ENCODE measurements at regions of chr1 and their contacts with region 1.

Region 1: GRCh38 chr1:31715087-31715872 is 11.5 kb upstream of the COL16A1 start:
- DNase-seq: peak; percentile 95
- ATAC-seq: peak; percentile 95

Region 2: GRCh38 chr1:31789259-31790065 is 74.2 kb after region 1 on chr1:
- intact Hi-C with region 1: loop called in 1 of 2 experiments (anchors 10 kb)
- DNase-seq: peak; percentile 95
- ATAC-seq: peak; percentile 88 to 92

Measured in left cardiac atrium (tissue), 4 donors.